RWPE1 (cell line): ENCODE measurements at regions of chrX and their contacts with region 1.

Region 1: GRCh38 chrX:69133921-69134542 is 31.2 kb downstream of the PJA1 start:
- DNase-seq: peak; percentile 46
- H3K27ac ChIP-seq: no peak overlapping the region
- CTCF ChIP-seq: peak; percentile 44

Region 2: DNA sequence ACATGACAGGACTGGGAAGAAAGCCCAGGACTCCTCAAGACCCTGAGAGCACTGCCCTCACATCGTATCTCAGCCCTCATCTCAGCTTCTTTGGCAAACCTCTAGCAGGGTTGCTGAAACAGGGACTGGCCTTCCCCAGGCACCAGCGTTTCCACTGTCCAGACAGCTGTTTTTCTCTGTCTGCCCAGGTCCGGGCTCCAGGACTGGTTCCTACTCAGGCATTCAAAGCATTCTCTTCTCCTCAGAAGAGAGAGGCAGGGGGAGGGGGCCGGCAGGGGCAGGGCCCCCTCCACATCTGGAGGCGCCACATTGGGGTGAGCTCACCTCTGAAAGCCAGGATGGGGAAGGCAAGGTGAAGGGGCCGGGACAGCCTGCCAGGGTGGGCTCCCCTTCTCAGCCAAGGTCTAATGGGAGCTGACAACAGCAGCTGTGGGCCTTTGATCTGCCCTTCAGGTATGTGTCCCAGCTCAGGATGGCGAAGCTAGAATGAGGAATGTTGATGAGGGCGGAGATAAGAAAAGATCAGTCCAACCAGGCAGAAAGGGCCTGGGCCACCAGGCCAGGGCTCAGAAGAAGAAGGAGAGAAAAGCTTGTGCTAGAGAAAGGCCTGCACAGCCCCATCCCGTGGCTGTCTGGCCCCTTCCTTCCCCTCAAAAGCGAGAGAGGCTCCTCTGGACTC is 29.1 kb before region 1 on chrX:
- CTCF ChIA-PET with region 1: no interaction called
- POLR2A ChIA-PET with region 1: no interaction called
- DNase-seq: no peak
- H3K27ac ChIP-seq: no peak overlapping the region
- CTCF ChIP-seq: no peak

Region 3: DNA sequence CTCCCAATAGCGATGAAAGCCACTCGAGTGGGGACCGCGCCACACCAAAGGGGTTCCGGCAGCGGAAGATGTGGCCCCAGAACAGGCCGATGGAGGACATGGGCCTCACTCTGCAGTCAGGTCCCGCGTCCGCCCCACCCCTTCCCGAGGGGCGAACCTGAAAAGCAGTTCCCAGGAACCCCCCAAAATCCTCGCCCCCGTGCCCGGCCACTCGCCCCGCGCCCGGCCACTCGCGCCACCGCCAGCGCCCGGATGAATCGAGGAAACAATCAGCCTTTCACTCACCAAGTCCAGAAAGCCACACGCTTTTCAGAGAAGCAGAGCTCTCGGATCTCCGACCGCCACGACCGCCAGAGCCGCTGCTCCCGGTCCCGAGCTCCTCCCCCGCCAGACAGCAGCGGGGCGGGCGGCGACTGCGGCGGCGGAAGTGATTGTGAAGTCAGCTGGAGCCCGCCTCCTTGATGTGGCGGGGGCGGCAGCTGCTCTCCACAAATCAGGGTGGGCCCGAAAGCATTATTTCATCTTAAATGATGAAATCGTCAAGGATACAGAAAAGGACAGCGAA is 31.1 kb after region 1 on chrX and contains the start of gene PJA1:
- CTCF ChIA-PET with region 1: no interaction called
- POLR2A ChIA-PET with region 1: interaction called, 10 read pairs
- DNase-seq: peak; percentile 57
- H3K27ac ChIP-seq: peak within 1 kb of the TSS; percentile 73
- CTCF ChIP-seq: no peak